ENCODE measurements at regions of chr5 and their contacts with region 1.

Region 1: GRCh38 chr5:176573564-176574296 is 24.6 kb downstream of the CDHR2 start:
- DNase-seq: peak; percentile 77
- H3K4me3 Mint-ChIP-seq: no peak overlapping the region
- H3K27ac Mint-ChIP-seq: no peak overlapping the region
- H3K4me1 Mint-ChIP-seq: peaks cover 14% of the 10 kb centered on the region
- H3K27me3 Mint-ChIP-seq: peaks cover 18% of the 10 kb centered on the region
- CTCF ChIP-seq: peak; percentile 94

Region 2: DNA sequence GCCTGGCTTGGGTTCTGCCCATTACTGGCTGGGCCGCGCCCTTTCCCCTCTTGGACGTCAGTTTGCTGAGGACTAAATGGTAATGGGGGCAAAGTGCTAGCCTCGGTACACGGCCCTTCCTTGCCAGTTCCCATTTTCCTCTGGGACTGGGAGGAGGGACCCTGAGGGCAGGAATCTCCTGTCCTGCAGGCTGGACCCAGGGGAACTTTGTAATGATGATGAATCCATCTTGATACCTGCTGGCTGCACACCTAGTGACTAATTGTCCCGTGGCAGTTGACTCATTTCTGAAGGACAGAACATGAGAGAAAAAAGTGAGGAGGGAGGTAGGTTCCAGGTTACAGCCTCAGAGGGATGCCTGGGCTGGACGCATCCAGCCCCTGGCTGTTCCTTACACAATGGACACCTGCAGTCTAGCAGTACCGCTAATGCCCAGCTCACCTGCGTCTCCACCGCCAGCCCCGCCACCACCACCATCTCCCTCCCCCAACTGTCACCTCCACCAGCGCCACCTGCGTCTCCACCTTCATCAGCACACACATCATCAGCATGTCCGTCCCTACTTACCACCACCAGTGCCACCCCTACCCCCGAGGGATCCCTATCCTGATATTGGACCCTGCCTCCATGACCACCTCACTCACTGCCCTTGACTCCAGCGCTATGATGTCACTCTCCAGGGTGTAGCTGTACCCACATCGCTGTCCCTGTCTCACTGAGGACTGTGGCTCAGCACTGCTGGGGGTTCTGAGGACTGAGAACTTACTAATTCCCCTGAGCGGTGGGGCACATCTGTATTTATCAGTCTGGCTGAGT is 20.3 kb before region 1 on chr5:
- CTCF ChIA-PET with region 1: interaction called, 22 read pairs
- POLR2A ChIA-PET with region 1: interaction called, 5 read pairs
- intact Hi-C with region 1: no loop called
- DNase-seq: peak; percentile 90
- H3K4me3 Mint-ChIP-seq: peak overlapping the region; percentile 6
- H3K27ac Mint-ChIP-seq: peak overlapping the region; percentile 39
- H3K4me1 Mint-ChIP-seq: peaks cover 25% of the 10 kb centered on the region
- H3K27me3 Mint-ChIP-seq: no peaks in the 10 kb centered on the region
- CTCF ChIP-seq: no peak

Region 3: GRCh38 chr5:176559683-176560082 is 14.0 kb before region 1 on chr5:
- CTCF ChIA-PET with region 1: interaction called, 24 read pairs
- POLR2A ChIA-PET with region 1: interaction called, 3 read pairs
- intact Hi-C with region 1: no loop called
- DNase-seq: peak; percentile 57
- H3K4me3 Mint-ChIP-seq: no peak overlapping the region
- H3K27ac Mint-ChIP-seq: no peak overlapping the region
- H3K4me1 Mint-ChIP-seq: peaks cover 7% of the 10 kb centered on the region
- H3K27me3 Mint-ChIP-seq: no peaks in the 10 kb centered on the region
- CTCF ChIP-seq: peak; percentile 19

Region 4: GRCh38 chr5:176590035-176590717 is 16.4 kb after region 1 on chr5:
- CTCF ChIA-PET with region 1: interaction called, 55 read pairs
- POLR2A ChIA-PET with region 1: no interaction called
- intact Hi-C with region 1: no loop called
- DNase-seq: peak; percentile 43
- H3K4me3 Mint-ChIP-seq: no peak overlapping the region
- H3K27ac Mint-ChIP-seq: no peak overlapping the region
- H3K4me1 Mint-ChIP-seq: no peaks in the 10 kb centered on the region
- H3K27me3 Mint-ChIP-seq: no peaks in the 10 kb centered on the region
- CTCF ChIP-seq: no peak

Region 5: DNA sequence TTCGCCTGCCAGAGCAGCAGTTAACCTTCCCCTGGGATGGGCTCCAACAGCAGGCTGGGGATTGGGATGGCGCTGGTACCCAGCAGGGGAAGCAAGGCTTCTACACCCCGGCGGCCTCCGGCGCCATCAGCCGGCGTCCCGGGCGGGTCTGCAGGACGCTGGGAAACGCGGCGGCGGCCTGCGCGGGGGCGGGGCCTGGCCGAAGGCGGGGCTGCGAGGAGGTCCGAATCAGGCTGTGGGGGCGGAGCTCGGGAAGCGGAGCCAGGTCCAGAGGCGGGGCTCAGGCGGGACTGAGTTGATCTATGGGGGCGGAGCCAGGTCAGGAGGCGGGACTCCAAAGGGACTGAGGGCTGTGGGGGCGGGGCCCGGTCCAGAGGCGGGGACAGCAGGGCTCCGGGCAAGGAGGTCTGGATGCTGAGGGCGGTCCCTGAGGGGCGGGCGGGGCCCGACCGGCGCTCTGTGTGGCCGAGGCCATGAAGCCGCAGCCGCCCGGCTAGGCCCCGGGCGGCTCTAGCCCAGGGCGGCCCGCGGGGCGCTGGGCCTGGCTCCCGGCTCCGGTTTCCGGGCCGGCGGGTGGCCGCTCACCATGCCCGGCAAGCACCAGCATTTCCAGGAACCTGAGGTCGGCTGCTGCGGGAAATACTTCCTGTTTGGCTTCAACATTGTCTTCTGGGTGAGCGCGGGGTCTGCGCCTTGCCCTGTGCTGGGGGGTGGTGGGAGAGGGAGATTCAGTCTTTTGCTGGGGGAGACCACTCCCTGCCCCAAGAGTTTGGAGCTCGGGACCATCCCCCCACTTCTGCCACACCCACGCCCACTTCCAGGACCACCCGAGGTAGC is 73.5 kb after region 1 on chr5 and contains the start of gene TSPAN17:
- CTCF ChIA-PET with region 1: interaction called, 14 read pairs
- POLR2A ChIA-PET with region 1: no interaction called
- intact Hi-C with region 1: loop called (anchors 1 kb)
- DNase-seq: peak; percentile 100
- H3K4me3 Mint-ChIP-seq: peak within 1 kb of the TSS; percentile 80
- H3K27ac Mint-ChIP-seq: peak within 1 kb of the TSS; percentile 76
- H3K4me1 Mint-ChIP-seq: peaks cover 21% of the 10 kb centered on the region
- H3K27me3 Mint-ChIP-seq: no peaks in the 10 kb centered on the region
- CTCF ChIP-seq: peak; percentile 49
- total RNA-seq, gene TSPAN17: 36.7 and 47.5 TPM in 2 replicates